Heart left ventricle (tissue), 16 donors: ENCODE measurements at regions of chr22 and their contacts with region 1.

Region 1: GRCh38 chr22:26461188-26461810 is 22.3 kb downstream of the HPS4 start:
- DNase-seq: peak in 4 of 5 donors; percentile 32 to 56 (median 49)
- ATAC-seq: peak; percentile 28 to 70 (median 60)
- H3K4me3 ChIP-seq: no peak overlapping the region
- H3K27ac ChIP-seq: no peak overlapping the region
- H3K4me1 ChIP-seq: peaks cover 0 to 9% (median 0%) of the 10 kb centered on the region in 12 donors
- H3K27me3 ChIP-seq: no peaks in the 10 kb centered on the region
- CTCF ChIP-seq: peak; percentile 50 to 76 (median 72)
- POLR2A ChIP-seq: no peak

Region 2: DNA sequence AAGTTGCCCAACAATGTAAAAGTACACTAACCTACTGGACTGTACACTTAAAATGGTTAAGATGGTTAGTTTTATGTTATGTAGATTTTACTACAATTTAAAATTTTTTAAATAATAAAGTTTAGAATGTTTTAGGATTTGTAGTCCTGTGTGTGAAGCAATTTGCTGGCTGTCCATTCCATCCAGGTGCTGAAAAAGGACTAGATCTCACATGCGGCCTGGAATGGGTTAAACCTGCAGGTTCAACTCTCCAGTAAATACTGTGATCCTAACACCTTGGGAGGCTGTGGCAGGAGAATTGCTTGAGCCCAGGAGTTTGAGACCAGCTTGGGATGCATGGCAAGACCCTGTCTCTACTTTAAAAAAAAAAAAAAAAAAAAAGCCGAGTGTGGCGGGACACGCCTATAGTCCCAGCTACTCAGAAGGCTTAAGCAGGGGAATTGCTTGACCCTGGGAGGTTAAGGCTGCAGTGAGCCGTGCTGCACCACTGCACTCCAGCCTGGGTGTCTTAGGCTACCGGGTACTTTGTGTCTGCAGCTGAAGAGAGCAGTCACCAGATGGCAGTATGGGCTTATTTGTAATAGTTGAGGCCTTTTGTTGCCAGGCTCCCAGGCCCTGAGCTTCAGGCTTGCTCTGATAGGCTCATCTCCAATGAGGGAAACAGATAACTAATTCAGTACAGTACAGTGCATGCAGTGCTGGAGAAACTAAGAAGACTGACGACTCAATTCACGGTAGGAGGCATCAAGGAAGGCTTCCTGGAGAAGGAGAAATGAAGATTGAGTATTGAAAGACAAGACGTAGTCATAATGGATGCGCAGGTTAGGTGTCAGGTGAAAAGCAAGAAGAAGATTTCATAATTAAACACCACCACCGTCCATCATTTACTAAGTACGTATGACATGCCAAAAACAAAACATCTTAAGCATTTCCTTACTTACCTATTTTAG is 97.0 kb before region 1 on chr22:
- intact Hi-C with region 1: loop called in 8 of 10 experiments (anchors 1 to 10 kb)
- DNase-seq: peak in 4 of 5 donors; percentile 25 to 62 (median 44)
- ATAC-seq: peak; percentile 72 to 90 (median 87)
- H3K4me3 ChIP-seq: no peak overlapping the region
- H3K27ac ChIP-seq: no peak overlapping the region
- H3K4me1 ChIP-seq: peaks cover 0 to 9% (median 0%) of the 10 kb centered on the region in 12 donors
- H3K27me3 ChIP-seq: peaks cover 0 to 39% (median 0%) of the 10 kb centered on the region in 9 donors
- CTCF ChIP-seq: peak; percentile 36 to 71 (median 58)
- POLR2A ChIP-seq: no peak

Region 3: DNA sequence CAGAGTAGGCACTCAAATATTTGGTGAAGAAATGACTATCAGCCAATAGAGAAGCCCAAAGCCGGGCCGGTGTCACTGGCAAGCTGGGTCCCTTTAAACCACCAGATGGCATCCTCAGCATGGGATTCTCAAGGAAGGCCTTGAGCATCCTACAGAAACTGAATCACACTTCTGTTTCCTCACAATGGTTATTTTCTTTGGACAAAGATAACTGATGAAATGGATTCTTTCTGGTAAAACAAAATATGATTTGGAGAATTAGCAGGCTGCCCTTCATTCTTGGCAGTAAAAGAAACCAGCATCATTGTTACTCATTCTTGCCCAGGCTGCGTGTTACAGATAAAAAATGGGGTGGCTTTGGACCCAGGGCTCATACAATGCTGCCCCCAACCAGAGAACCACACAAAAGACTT is 62.6 kb before region 1 on chr22:
- intact Hi-C with region 1: loop called in 9 of 10 experiments (anchors 1 to 10 kb)
- DNase-seq: peak in 4 of 5 donors; percentile 26 to 48 (median 40)
- ATAC-seq: peak; percentile 58 to 76 (median 66)
- H3K4me3 ChIP-seq: no peak overlapping the region
- H3K27ac ChIP-seq: no peak overlapping the region
- H3K4me1 ChIP-seq: no peaks in the 10 kb centered on the region
- H3K27me3 ChIP-seq: peaks cover 0 to 10% (median 4%) of the 10 kb centered on the region in 9 donors
- CTCF ChIP-seq: peak; percentile 43 to 71 (median 58)
- POLR2A ChIP-seq: no peak

Region 4: GRCh38 chr22:26845026-26845743 is 383.9 kb after region 1 on chr22:
- intact Hi-C with region 1: no loop called
- DNase-seq: no peak
- ATAC-seq: no peak
- H3K4me3 ChIP-seq: no peak overlapping the region
- H3K27ac ChIP-seq: no peak overlapping the region
- H3K4me1 ChIP-seq: peaks cover 0 to 18% (median 0%) of the 10 kb centered on the region in 12 donors
- H3K27me3 ChIP-seq: no peaks in the 10 kb centered on the region
- CTCF ChIP-seq: no peak
- POLR2A ChIP-seq: no peak